Caco-2 (cell line): ENCODE measurements at regions of chr6 and their contacts with region 1.

Region 1: GRCh38 chr6:10582774-10583508 is 61.8 kb downstream of the GCNT2 start:
- DNase-seq: no peak
- H3K4me3 ChIP-seq: peak overlapping the region; percentile 11; the same call in 1 of the 2 replicates
- H3K4me3 Mint-ChIP-seq: no peak overlapping the region
- H3K27ac Mint-ChIP-seq: peak overlapping the region; percentile 86
- H3K4me1 ChIP-seq: peaks cover 48% of the 10 kb centered on the region
- H3K4me1 Mint-ChIP-seq: peaks cover 41% of the 10 kb centered on the region
- H3K27me3 ChIP-seq: no peaks in the 10 kb centered on the region
- H3K27me3 Mint-ChIP-seq: no peaks in the 10 kb centered on the region
- CTCF ChIP-seq: no peak

Region 2: GRCh38 chr6:10465629-10466504 is 117.1 kb before region 1 on chr6:
- CTCF ChIA-PET with region 1: no interaction called
- POLR2A ChIA-PET with region 1: no interaction called
- intact Hi-C with region 1: no loop called
- DNase-seq: peak; percentile 65 to 73
- H3K4me3 ChIP-seq: no peak overlapping the region
- H3K4me3 Mint-ChIP-seq: no peak overlapping the region
- H3K27ac Mint-ChIP-seq: no peak overlapping the region
- H3K4me1 ChIP-seq: no peaks in the 10 kb centered on the region
- H3K4me1 Mint-ChIP-seq: no peaks in the 10 kb centered on the region
- H3K27me3 ChIP-seq: no peaks in the 10 kb centered on the region
- H3K27me3 Mint-ChIP-seq: peaks cover 4% of the 10 kb centered on the region
- CTCF ChIP-seq: peak; percentile 50 to 67

Region 3: GRCh38 chr6:10521104-10521808 is 61.7 kb before region 1 on chr6 and contains the start of gene GCNT2:
- CTCF ChIA-PET with region 1: interaction called, 4 read pairs
- POLR2A ChIA-PET with region 1: interaction called, 12 read pairs
- intact Hi-C with region 1: loop called (anchors 2 kb)
- DNase-seq: peak; percentile 85 to 90
- H3K4me3 ChIP-seq: peak within 1 kb of the TSS; percentile 33
- H3K4me3 Mint-ChIP-seq: peak within 1 kb of the TSS; percentile 85
- H3K27ac Mint-ChIP-seq: peak within 1 kb of the TSS; percentile 90
- H3K4me1 ChIP-seq: peaks cover 33% of the 10 kb centered on the region
- H3K4me1 Mint-ChIP-seq: peaks cover 27% of the 10 kb centered on the region
- H3K27me3 ChIP-seq: no peaks in the 10 kb centered on the region
- H3K27me3 Mint-ChIP-seq: no peaks in the 10 kb centered on the region
- CTCF ChIP-seq: no peak
- total RNA-seq, gene GCNT2: 68.1 and 70.7 TPM in 2 replicates

Region 4: DNA sequence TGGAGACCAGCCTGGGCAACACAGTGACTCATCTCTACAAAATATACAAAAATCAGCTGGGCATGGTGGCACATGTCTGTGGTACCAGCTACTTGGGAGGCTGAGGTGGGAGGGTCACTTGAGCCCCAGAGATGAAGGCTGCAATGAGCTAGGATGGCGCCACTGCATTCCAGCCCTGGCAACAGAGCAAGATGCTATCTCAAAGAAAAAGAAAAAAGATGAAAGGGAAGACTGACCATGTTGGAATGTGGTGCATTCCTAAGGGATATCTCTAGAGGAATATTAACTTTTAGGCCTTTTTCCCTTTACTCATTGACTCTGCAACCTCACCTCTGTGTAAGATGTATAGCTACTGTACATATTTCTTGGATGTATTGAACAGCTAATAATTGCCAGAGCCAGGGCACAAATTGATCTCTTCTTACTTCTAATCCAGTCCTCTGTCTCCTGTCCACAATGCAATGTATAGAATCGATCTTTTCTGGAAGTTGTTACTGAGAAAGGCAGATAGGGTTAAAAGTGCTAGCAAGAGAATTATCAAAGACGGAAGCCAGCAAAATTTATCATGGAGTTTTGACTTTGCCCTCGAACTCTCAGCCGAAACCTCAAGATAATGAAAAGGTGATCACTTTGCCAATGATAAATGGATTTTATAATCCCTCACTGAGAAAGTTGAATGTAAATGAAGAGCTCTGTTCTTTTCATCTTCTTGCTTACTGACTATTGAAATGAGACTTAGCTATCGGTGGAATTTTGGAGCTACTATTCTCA is 15.5 kb before region 1 on chr6:
- CTCF ChIA-PET with region 1: no interaction called
- POLR2A ChIA-PET with region 1: interaction called, 16 read pairs
- intact Hi-C with region 1: loop called (anchors 1 kb)
- DNase-seq: peak; percentile 78 to 85
- H3K4me3 ChIP-seq: no peak overlapping the region
- H3K4me3 Mint-ChIP-seq: peak overlapping the region; percentile 54
- H3K27ac Mint-ChIP-seq: peak overlapping the region; percentile 88
- H3K4me1 ChIP-seq: peaks cover 56% of the 10 kb centered on the region
- H3K4me1 Mint-ChIP-seq: peaks cover 55% of the 10 kb centered on the region
- H3K27me3 ChIP-seq: no peaks in the 10 kb centered on the region
- H3K27me3 Mint-ChIP-seq: no peaks in the 10 kb centered on the region
- CTCF ChIP-seq: no peak